BJ (cell line): ENCODE measurements at regions of chr17 and their contacts with region 1.

Region 1: GRCh38 chr17:60557805-60558204 is 31.8 kb upstream of the APPBP2 start:
- DNase-seq: no peak
- H3K4me3 ChIP-seq: no peak overlapping the region
- H3K27me3 ChIP-seq: no peaks in the 10 kb centered on the region
- CTCF ChIP-seq: no peak

Region 2: DNA sequence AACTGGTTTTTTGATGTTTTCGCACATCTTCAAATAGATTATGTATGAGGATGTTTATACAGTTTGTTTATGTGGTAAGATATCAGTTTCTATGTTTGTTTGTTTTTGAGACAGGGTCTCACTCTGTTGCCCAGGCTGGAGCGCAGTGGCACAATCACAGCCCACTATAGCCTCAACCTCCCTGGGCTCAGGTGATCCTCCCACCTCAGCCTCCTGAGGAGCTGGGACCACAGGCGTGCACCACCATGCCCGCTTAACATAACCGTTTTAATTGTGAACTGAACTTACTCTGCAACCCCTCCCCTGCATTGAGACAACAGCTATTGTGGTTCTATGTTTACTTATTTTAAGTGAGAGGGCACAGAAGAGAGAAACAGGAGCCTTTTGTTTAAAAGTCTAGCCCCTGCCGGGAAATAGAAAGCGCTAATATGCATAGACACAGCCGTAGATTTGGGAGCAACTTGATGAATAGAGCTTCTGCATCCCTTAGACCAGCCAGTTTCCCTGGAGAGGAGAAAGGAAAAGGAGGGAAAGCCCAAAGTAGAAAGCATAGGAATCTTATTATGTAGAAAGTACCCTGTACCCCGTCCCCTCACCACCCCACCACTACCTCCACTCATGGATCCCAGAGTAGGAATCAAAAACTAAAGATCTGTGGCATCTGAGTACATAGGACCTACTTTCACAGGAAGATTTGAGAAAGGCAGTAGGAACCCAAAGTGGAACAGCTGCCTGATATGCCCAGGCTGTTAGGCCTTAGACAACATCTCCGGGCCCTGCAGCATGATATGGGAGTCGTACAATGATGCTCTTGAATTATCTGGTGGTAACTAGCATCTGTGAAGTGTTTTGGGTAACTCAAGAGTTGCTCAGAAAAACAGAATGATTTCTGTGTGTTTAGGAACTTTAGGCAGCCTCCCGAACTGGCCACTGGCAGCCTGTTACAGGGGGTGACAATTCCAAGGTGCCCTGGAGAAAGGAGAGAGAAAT is 12.0 kb before region 1 on chr17:
- CTCF ChIA-PET with region 1: interaction called, 3 read pairs
- POLR2A ChIA-PET with region 1: interaction called, 12 read pairs
- DNase-seq: no peak
- H3K4me3 ChIP-seq: no peak overlapping the region
- H3K27me3 ChIP-seq: no peaks in the 10 kb centered on the region
- CTCF ChIP-seq: no peak

Region 3: GRCh38 chr17:60568561-60568960 is 10.8 kb after region 1 on chr17:
- CTCF ChIA-PET with region 1: interaction called, 24 read pairs
- POLR2A ChIA-PET with region 1: interaction called, 3 read pairs
- DNase-seq: no peak
- H3K4me3 ChIP-seq: no peak overlapping the region
- H3K27me3 ChIP-seq: no peaks in the 10 kb centered on the region
- CTCF ChIP-seq: no peak